Caco-2 (cell line): ENCODE measurements at regions of chr3 and their contacts with region 1.

Region 1: GRCh38 chr3:46558184-46559043 is 7.7 kb downstream of the LRRC2 start:
- DNase-seq: peak; percentile 93 to 95
- H3K4me3 ChIP-seq: peak overlapping the region; percentile 59
- H3K4me3 Mint-ChIP-seq: peak overlapping the region; percentile 87
- H3K27ac Mint-ChIP-seq: peak overlapping the region; percentile 84
- H3K4me1 ChIP-seq: peaks cover 15% of the 10 kb centered on the region; the same call in 1 of the 2 replicates
- H3K4me1 Mint-ChIP-seq: peaks cover 8% of the 10 kb centered on the region
- H3K27me3 ChIP-seq: no peaks in the 10 kb centered on the region
- H3K27me3 Mint-ChIP-seq: no peaks in the 10 kb centered on the region
- CTCF ChIP-seq: peak; percentile 57 to 87

Region 2: DNA sequence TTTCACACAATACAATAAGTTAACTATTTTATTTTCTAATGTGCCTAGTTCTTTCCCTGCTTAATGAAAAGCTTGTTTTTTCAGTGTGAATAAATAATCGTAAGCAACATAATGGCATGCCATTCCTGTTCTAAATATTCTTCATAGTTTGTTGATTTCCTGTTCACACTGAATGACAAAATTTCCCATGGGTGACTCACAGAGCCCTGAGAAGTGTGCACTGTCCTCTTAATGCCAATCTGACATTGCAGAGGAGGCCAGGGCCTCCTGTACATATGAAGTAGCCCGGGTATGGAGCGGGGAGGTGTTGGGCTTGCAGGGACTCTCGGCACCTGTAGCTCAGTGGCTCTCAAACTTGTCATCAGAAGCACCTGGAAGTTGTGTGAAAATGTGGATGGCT is 291.8 kb before region 1 on chr3:
- CTCF ChIA-PET with region 1: no interaction called
- POLR2A ChIA-PET with region 1: no interaction called
- intact Hi-C with region 1: no loop called
- DNase-seq: no peak
- H3K4me3 ChIP-seq: no peak overlapping the region
- H3K4me3 Mint-ChIP-seq: no peak overlapping the region
- H3K27ac Mint-ChIP-seq: no peak overlapping the region
- H3K4me1 ChIP-seq: no peaks in the 10 kb centered on the region
- H3K4me1 Mint-ChIP-seq: no peaks in the 10 kb centered on the region
- H3K27me3 ChIP-seq: no peaks in the 10 kb centered on the region
- H3K27me3 Mint-ChIP-seq: no peaks in the 10 kb centered on the region
- CTCF ChIP-seq: no peak

Region 3: GRCh38 chr3:46427916-46428833 is 130.2 kb before region 1 on chr3:
- CTCF ChIA-PET with region 1: interaction called, 5 read pairs
- POLR2A ChIA-PET with region 1: interaction called, 5 read pairs
- intact Hi-C with region 1: loop called (anchors 1 kb)
- DNase-seq: peak; percentile 25 to 45
- H3K4me3 ChIP-seq: no peak overlapping the region
- H3K4me3 Mint-ChIP-seq: no peak overlapping the region
- H3K27ac Mint-ChIP-seq: no peak overlapping the region
- H3K4me1 ChIP-seq: peaks cover 31% of the 10 kb centered on the region
- H3K4me1 Mint-ChIP-seq: peaks cover 21% of the 10 kb centered on the region
- H3K27me3 ChIP-seq: no peaks in the 10 kb centered on the region
- H3K27me3 Mint-ChIP-seq: no peaks in the 10 kb centered on the region
- CTCF ChIP-seq: peak in 1 of 2 experiments; percentile 11

Region 4: GRCh38 chr3:46488735-46489361 is 69.6 kb before region 1 on chr3:
- CTCF ChIA-PET with region 1: interaction called, 119 read pairs
- POLR2A ChIA-PET with region 1: interaction called, 11 read pairs
- intact Hi-C with region 1: loop called (anchors 1 kb)
- DNase-seq: peak; percentile 92 to 95
- H3K4me3 ChIP-seq: no peak overlapping the region
- H3K4me3 Mint-ChIP-seq: peak overlapping the region; percentile 63
- H3K27ac Mint-ChIP-seq: no peak overlapping the region
- H3K4me1 ChIP-seq: peaks cover 21% of the 10 kb centered on the region
- H3K4me1 Mint-ChIP-seq: peaks cover 12% of the 10 kb centered on the region
- H3K27me3 ChIP-seq: no peaks in the 10 kb centered on the region
- H3K27me3 Mint-ChIP-seq: no peaks in the 10 kb centered on the region
- CTCF ChIP-seq: peak; percentile 98 to 100

Region 5: GRCh38 chr3:46496741-46497554 is 61.5 kb before region 1 on chr3:
- CTCF ChIA-PET with region 1: interaction called, 16 read pairs
- POLR2A ChIA-PET with region 1: no interaction called
- intact Hi-C with region 1: loop called (anchors 2 kb)
- DNase-seq: peak in 1 of 2 experiments; percentile 15
- H3K4me3 ChIP-seq: no peak overlapping the region
- H3K4me3 Mint-ChIP-seq: no peak overlapping the region
- H3K27ac Mint-ChIP-seq: no peak overlapping the region
- H3K4me1 ChIP-seq: 0 out of 2 replicates have a peak, but pooled peaks cover 10% of the 10 kb centered on the region
- H3K4me1 Mint-ChIP-seq: no peaks in the 10 kb centered on the region
- H3K27me3 ChIP-seq: no peaks in the 10 kb centered on the region; the same call in 1 of the 2 replicates
- H3K27me3 Mint-ChIP-seq: no peaks in the 10 kb centered on the region
- CTCF ChIP-seq: peak in 1 of 2 experiments; percentile 18

Region 6: DNA sequence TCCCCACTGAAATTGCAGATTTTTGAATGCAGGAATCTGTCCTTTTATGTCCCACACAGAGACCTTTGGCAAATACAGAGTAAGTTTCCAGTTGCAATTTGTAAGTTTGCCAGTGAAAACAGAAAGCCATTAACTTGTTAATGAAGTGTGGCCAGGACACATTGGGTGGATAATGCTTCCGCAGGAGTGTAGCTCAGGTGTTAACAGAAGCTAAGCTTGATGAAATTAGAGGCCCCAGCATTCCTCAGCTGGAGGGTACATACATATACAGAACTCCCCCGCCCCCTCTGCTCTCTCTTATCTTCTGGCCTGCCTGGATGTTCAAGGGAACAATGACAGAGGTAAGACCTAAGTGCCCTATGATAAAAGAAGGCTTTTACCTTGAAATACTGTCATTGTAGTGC is 15.8 kb after region 1 on chr3:
- CTCF ChIA-PET with region 1: interaction called, 14 read pairs
- POLR2A ChIA-PET with region 1: interaction called, 4 read pairs
- intact Hi-C with region 1: loop called (anchors 1 kb)
- DNase-seq: peak; percentile 85 to 86
- H3K4me3 ChIP-seq: no peak overlapping the region
- H3K4me3 Mint-ChIP-seq: peak overlapping the region; percentile 38
- H3K27ac Mint-ChIP-seq: peak overlapping the region; percentile 66
- H3K4me1 ChIP-seq: peaks cover 25% of the 10 kb centered on the region
- H3K4me1 Mint-ChIP-seq: no peaks in the 10 kb centered on the region
- H3K27me3 ChIP-seq: no peaks in the 10 kb centered on the region
- H3K27me3 Mint-ChIP-seq: no peaks in the 10 kb centered on the region
- CTCF ChIP-seq: no peak

Region 7: GRCh38 chr3:46585799-46586693 is 27.6 kb after region 1 on chr3:
- CTCF ChIA-PET with region 1: interaction called, 12 read pairs
- POLR2A ChIA-PET with region 1: interaction called, 12 read pairs
- intact Hi-C with region 1: no loop called
- DNase-seq: peak; percentile 44 to 74
- H3K4me3 ChIP-seq: no peak overlapping the region
- H3K4me3 Mint-ChIP-seq: peak overlapping the region; percentile 37
- H3K27ac Mint-ChIP-seq: peak overlapping the region; percentile 93
- H3K4me1 ChIP-seq: peaks cover 32% of the 10 kb centered on the region
- H3K4me1 Mint-ChIP-seq: peaks cover 16% of the 10 kb centered on the region
- H3K27me3 ChIP-seq: no peaks in the 10 kb centered on the region
- H3K27me3 Mint-ChIP-seq: no peaks in the 10 kb centered on the region
- CTCF ChIP-seq: no peak

Region 8: GRCh38 chr3:46695177-46695961 is 137.0 kb after region 1 on chr3:
- CTCF ChIA-PET with region 1: interaction called, 13 read pairs
- POLR2A ChIA-PET with region 1: no interaction called
- intact Hi-C with region 1: no loop called
- DNase-seq: peak; percentile 42 to 51
- H3K4me3 ChIP-seq: no peak overlapping the region
- H3K4me3 Mint-ChIP-seq: no peak overlapping the region
- H3K27ac Mint-ChIP-seq: no peak overlapping the region
- H3K4me1 ChIP-seq: peaks cover 9% of the 10 kb centered on the region; the same call in 1 of the 2 replicates
- H3K4me1 Mint-ChIP-seq: peaks cover 16% of the 10 kb centered on the region
- H3K27me3 ChIP-seq: no peaks in the 10 kb centered on the region
- H3K27me3 Mint-ChIP-seq: no peaks in the 10 kb centered on the region
- CTCF ChIP-seq: peak; percentile 25 to 26